Mammary epithelial cell (primary cell): ENCODE measurements at regions of chr22 and their contacts with region 1.

Region 1: DNA sequence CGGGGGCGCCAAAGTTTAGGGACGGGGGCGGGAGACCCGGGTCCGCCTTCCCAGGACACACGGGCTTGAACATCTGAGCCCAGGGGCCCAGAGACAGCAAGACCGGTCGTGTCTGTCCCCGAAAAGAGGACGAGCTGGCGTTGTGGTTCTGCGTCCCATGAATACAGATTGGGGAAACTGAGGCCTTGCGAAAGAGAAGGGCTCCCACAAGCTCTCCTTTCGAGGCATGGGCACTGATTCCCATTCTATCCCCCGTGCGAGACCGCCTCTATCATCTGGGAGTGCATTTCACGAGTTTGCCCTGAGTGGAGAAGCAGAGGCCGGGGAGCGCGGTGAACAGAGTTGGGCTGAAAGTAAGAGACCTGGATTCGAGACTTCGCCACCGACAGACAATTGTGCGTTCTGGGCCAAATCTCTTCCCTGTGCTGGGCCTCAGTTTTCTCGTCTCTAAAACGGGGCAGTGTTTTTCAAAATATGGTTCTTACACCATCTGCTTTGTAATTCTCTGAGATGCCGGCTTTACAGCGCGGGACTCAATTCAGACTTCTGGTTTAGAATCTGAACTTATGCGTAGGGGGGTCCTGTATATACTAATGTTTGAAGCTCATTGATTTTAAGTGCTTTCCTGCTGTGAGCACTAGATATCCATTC is 471 bp downstream of the RNF185 start:
- DNase-seq: no peak
- H3K4me3 ChIP-seq: peak overlapping the region; percentile 72 to 95 (median 89)
- H3K27ac ChIP-seq: peak overlapping the region; percentile 79
- H3K4me1 ChIP-seq: peaks cover 21% of the 10 kb centered on the region
- H3K27me3 ChIP-seq: no peaks in the 10 kb centered on the region
- CTCF ChIP-seq: no peak

Region 2: DNA sequence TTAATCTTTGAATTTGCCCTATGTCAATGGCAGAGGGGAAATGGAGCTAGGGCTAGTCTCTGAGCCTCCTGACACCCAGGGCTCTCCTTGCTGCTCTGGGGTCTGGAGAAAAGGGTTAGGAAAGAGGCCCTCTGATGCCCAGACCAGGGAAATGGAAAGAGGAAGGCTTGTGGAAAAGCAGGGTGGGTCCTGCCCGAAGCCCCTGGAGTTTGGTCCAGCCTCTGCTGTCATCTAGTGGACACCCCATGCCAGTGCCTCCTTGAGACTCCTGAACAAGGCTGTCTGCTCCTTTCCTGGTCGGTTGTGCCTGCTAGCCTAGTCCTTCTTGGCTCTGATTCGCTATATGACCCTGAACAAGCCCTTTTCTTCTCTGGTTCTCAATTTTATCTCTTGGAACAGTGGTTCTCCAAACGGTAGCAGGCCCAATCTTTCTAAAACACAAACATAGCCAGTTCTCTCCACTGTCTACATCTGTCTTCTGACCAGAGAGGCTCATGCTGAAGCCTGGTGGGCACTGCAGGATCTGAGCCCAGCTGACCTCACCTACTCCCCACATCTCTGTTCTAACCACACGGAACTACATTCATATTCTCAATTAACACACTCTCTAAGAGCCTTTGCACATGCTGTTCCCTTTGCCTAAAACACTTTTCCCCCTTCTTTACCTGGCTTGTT is 11.4 kb before region 1 on chr22:
- CTCF ChIA-PET with region 1: no interaction called
- dilution Hi-C with region 1: no loop called
- in situ Hi-C with region 1: no loop called
- intact Hi-C with region 1: no loop called
- DNase-seq: peak; percentile 48
- H3K4me3 ChIP-seq: no peak overlapping the region
- H3K27ac ChIP-seq: no peak overlapping the region
- H3K4me1 ChIP-seq: no peaks in the 10 kb centered on the region
- H3K27me3 ChIP-seq: no peaks in the 10 kb centered on the region
- CTCF ChIP-seq: peak; percentile 98 to 99

Region 3: DNA sequence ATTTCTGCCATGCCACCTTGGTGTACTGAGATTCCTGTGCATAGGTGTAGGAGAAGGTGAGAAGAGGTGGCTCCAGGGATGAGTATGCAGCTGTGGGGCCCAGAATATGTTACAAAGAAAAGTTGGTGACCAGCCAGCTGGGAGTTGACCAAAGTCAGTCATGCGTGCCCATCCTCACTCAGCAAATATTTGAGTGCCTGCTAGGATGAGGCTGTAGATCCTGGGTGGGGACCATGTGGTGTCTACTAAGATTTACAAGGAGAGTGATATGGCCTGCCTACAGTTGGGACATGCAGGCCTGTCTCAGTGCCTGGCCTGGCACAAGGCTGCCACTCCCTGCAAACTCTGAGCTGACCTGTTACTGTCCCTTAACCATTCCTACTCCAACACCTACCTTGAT is 18.9 kb after region 1 on chr22:
- CTCF ChIA-PET with region 1: no interaction called
- dilution Hi-C with region 1: no loop called
- in situ Hi-C with region 1: no loop called
- intact Hi-C with region 1: loop called (anchors 1 kb)
- DNase-seq: peak; percentile 67
- H3K4me3 ChIP-seq: no peak overlapping the region
- H3K27ac ChIP-seq: peak overlapping the region; percentile 1
- H3K4me1 ChIP-seq: peaks cover 35% of the 10 kb centered on the region
- H3K27me3 ChIP-seq: no peaks in the 10 kb centered on the region
- CTCF ChIP-seq: no peak

Region 4: DNA sequence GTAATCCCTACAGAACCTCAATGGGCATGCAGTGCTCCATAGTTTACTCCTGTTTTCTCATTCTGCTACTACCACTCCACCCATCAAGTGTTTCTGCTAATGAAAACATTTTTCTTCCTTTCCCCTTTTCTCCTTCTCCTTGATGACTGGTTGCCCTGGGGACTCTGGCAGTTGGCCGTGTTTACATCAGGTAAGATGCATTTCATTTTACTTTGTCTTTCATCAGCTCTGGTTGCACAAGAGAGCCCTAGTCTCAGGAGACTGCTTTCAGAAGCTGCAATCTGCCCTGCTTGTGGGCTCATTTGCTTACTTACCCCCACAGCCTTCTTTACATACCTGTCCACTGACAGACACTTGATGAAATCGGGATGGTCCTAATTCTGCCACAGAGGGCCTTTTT is 32.1 kb after region 1 on chr22:
- CTCF ChIA-PET with region 1: no interaction called
- dilution Hi-C with region 1: no loop called
- in situ Hi-C with region 1: no loop called
- intact Hi-C with region 1: loop called (anchors 1 kb)
- DNase-seq: peak; percentile 8
- H3K4me3 ChIP-seq: no peak overlapping the region
- H3K27ac ChIP-seq: no peak overlapping the region
- H3K4me1 ChIP-seq: no peaks in the 10 kb centered on the region
- H3K27me3 ChIP-seq: no peaks in the 10 kb centered on the region
- CTCF ChIP-seq: no peak

Region 5: GRCh38 chr22:31230871-31231621 is 70.6 kb after region 1 on chr22:
- CTCF ChIA-PET with region 1: no interaction called
- dilution Hi-C with region 1: no loop called
- in situ Hi-C with region 1: no loop called
- intact Hi-C with region 1: loop called (anchors 2 kb)
- DNase-seq: peak; percentile 16
- H3K4me3 ChIP-seq: no peak overlapping the region
- H3K27ac ChIP-seq: no peak overlapping the region
- H3K4me1 ChIP-seq: peaks cover 3% of the 10 kb centered on the region
- H3K27me3 ChIP-seq: no peaks in the 10 kb centered on the region
- CTCF ChIP-seq: peak; percentile 43 to 77

Region 6: DNA sequence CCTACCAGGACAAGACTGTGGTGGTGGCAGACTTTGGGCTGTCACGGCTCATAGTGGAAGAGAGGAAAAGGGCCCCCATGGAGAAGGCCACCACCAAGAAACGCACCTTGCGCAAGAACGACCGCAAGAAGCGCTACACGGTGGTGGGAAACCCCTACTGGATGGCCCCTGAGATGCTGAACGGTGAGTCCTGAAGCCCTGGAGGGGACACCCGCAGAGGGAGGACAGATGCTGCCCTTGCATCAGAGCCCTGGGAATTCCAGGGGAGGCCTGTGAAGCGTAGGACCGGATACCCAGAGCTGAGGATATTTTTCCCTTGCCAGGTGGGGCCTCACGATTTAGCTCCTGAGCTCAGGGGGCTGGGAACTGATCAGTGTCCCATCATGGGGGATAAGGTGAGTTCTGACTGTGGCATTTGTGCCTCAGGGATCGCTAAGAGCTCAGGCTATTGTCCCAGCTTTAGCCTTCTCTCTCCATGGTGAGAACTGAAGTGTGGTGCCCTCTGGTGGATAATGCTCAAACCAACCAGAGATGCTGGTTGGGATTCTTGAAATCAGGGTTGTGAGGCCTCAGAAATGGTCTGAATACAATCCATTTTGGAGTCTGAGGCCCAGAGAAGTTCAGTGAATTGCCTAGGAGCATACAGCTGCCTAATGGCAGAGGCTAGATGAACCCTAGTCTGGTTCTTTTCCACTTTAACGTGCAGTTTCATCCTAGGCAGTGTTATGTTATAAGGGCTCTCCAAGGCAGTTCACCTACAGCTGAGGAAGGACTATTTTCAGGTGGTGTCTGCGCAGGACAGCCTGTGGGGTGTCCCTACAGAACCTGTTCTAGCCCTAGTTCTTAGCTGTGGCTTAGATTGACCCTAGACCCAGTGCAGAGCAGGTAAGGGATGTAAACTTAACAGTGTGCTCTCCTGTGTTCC is 112.3 kb after region 1 on chr22:
- CTCF ChIA-PET with region 1: interaction called, 4 read pairs
- dilution Hi-C with region 1: no loop called
- in situ Hi-C with region 1: no loop called
- intact Hi-C with region 1: loop called (anchors 2 kb)
- DNase-seq: peak; percentile 47
- H3K4me3 ChIP-seq: no peak overlapping the region
- H3K27ac ChIP-seq: no peak overlapping the region
- H3K4me1 ChIP-seq: no peaks in the 10 kb centered on the region
- H3K27me3 ChIP-seq: no peaks in the 10 kb centered on the region
- CTCF ChIP-seq: peak; percentile 62 to 76

Region 7: GRCh38 chr22:31313366-31314147 is 153.1 kb after region 1 on chr22:
- CTCF ChIA-PET with region 1: no interaction called
- dilution Hi-C with region 1: no loop called
- in situ Hi-C with region 1: no loop called
- intact Hi-C with region 1: loop called (anchors 2 kb)
- DNase-seq: peak; percentile 87
- H3K4me3 ChIP-seq: no peak overlapping the region
- H3K27ac ChIP-seq: peak overlapping the region; percentile 52
- H3K4me1 ChIP-seq: peaks cover 6% of the 10 kb centered on the region
- H3K27me3 ChIP-seq: no peaks in the 10 kb centered on the region
- CTCF ChIP-seq: peak; percentile 88 to 95